ENCODE measurements at regions of chr5 and their contacts with region 1.

Region 1: DNA sequence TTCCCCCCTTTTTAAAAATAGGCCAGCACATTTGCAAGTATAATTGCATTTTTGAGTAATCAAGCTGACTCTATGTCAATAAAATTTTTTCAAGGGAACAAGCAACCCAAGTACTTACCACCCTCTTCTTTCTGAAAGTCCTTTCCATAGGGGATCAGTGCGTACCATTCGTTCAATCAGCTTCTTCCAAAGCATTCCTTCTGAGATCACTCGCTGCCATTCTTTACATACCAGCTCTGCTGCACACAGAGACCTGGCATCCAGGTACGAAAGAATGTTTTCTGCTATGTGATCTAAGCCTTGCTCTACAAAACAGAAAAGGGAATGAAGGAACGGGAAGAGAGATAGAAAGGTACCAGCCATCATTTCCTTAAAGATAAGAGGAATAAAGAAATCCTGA is 106.6 kb downstream of the FBXW11 start:
- DNase-seq: no peak
- H3K4me3 ChIP-seq: no peak overlapping the region
- H3K27ac ChIP-seq: no peak overlapping the region
- H3K4me1 ChIP-seq: no peaks in the 10 kb centered on the region
- H3K27me3 ChIP-seq: no peaks in the 10 kb centered on the region
- CTCF ChIP-seq: no peak
- POLR2A ChIP-seq: no peak

Region 2: GRCh38 chr5:171419688-171420430 is 479.9 kb before region 1 on chr5:
- intact Hi-C with region 1: loop called (anchors 5 kb)
- DNase-seq: peak in 1 of 2 donors; percentile 33
- H3K4me3 ChIP-seq: peak overlapping the region in 1 of 2 donors; percentile 29
- H3K27ac ChIP-seq: no peak overlapping the region
- H3K4me1 ChIP-seq: peaks cover 0 to 18% of the 10 kb centered on the region in 2 donors
- H3K27me3 ChIP-seq: peaks cover 0 to 6% of the 10 kb centered on the region in 2 donors
- CTCF ChIP-seq: peak in 2 of 4 experiments; percentile 8 to 10
- POLR2A ChIP-seq: no peak